ENCODE measurements at regions of chr16 and their contacts with region 1.

Region 1: DNA sequence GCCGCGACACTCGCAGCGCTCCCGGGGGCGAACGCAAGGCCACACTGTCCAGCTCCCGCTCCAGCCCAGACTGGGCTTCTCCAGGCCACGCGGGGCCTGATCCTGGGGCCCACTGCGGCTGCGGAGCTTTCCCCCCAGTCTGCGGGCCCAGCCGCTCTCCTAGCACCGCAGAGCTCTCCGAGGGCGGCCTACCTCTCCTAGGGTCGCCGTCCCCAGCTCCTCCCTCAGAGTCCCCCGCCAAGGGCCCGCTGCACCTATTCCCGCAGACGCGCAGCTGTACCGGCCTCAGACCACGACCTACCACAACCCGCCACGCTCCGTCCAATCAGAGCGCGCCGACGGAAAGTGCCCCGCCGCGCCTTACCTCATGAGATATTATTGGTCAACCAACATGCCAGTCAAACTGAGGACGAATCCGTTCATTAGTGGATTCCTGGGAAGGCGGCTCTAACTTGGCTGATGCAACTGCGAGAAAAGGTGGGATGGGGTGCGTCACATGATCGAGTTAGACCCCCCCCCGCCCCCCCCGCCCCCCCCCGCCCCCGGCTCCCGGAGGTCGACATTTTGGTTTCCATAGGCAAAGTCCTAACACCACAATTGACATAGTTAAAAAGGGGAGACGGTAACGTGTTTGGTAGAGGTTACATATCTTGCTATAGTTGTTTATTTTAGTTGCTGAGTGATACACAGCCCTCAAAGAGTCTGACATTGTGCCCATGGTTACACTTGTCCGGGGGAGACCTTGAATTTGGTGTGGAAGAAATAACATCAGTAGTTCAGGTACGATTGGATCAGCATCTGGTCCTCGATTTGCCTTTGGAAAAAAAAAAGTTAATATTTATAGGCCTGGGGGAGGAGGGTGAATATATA is at the start of gene AARS1:
- DNase-seq: peak; percentile 96
- ATAC-seq: peak; percentile 99
- H3K4me3 Mint-ChIP-seq: peak within 1 kb of the TSS; percentile 92
- H3K27ac Mint-ChIP-seq: peak within 1 kb of the TSS; percentile 96
- H3K4me1 Mint-ChIP-seq: peaks cover 37% of the 10 kb centered on the region
- H3K27me3 Mint-ChIP-seq: no peaks in the 10 kb centered on the region
- total RNA-seq, gene AARS1: 180 to 189 TPM

Region 2: GRCh38 chr16:70251629-70252354 is 37.7 kb before region 1 on chr16 and contains the start of gene EXOSC6:
- CTCF ChIA-PET with region 1: interaction called, 6 read pairs
- POLR2A ChIA-PET with region 1: interaction called, 6 read pairs
- intact Hi-C with region 1: loop called (anchors 1 kb)
- DNase-seq: peak; percentile 96
- ATAC-seq: peak; percentile 94
- H3K4me3 Mint-ChIP-seq: peak within 1 kb of the TSS; percentile 85
- H3K27ac Mint-ChIP-seq: peak within 1 kb of the TSS; percentile 84
- H3K4me1 Mint-ChIP-seq: peaks cover 16% of the 10 kb centered on the region
- H3K27me3 Mint-ChIP-seq: no peaks in the 10 kb centered on the region
- total RNA-seq, gene EXOSC6: 18.7 to 23.5 TPM

Region 3: DNA sequence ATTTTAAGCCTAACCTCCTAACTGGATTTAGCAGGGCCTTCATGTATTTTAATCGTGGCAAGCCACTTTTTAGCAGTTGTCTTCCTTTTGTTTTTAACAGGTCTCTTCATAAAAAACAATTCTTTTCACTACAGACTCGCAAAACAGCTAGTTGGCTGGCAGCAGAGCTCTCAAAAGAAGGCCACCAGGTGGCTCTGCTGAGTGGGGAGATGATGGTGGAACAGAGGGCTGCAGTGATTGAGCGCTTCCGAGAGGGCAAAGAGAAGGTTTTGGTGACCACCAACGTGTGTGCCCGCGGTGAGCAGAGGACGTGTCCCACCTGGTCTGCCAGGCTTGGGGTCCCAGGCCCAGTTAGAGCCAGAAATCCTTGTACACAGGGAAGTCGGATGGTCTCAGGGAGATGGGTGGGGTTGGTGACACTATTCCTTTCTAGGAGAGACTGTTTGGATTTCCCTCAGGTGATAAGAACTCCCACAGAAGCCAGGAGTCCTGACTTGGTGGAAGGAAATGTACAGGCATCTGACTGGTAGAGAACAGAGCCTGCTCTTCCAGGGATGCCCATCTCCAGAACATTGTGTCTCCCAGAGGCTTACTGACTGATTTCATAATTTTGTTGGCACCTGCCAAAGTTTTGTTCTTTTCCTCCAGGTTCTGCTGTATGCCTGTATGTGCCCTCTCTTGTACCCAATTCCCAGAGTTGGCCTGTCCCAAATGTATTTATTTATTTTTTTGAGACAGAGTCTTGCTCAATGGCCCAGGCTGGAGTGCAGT is 42.3 kb after region 1 on chr16:
- CTCF ChIA-PET with region 1: no interaction called
- POLR2A ChIA-PET with region 1: no interaction called
- intact Hi-C with region 1: no loop called
- DNase-seq: peak; percentile 34
- ATAC-seq: no peak
- H3K4me3 Mint-ChIP-seq: no peak overlapping the region
- H3K27ac Mint-ChIP-seq: no peak overlapping the region
- H3K4me1 Mint-ChIP-seq: no peaks in the 10 kb centered on the region
- H3K27me3 Mint-ChIP-seq: no peaks in the 10 kb centered on the region

Region 4: GRCh38 chr16:70438969-70439862 is 149.8 kb after region 1 on chr16 and contains the start of gene ST3GAL2:
- CTCF ChIA-PET with region 1: no interaction called
- POLR2A ChIA-PET with region 1: no interaction called
- intact Hi-C with region 1: loop called in 1 of 2 experiments (anchors 1 kb)
- DNase-seq: peak; percentile 97
- ATAC-seq: peak; percentile 97
- H3K4me3 Mint-ChIP-seq: peak within 1 kb of the TSS; percentile 96
- H3K27ac Mint-ChIP-seq: peak within 1 kb of the TSS; percentile 89
- H3K4me1 Mint-ChIP-seq: peaks cover 33% of the 10 kb centered on the region
- H3K27me3 Mint-ChIP-seq: no peaks in the 10 kb centered on the region
- total RNA-seq, gene ST3GAL2: 14.8 to 16.6 TPM

Region 5: DNA sequence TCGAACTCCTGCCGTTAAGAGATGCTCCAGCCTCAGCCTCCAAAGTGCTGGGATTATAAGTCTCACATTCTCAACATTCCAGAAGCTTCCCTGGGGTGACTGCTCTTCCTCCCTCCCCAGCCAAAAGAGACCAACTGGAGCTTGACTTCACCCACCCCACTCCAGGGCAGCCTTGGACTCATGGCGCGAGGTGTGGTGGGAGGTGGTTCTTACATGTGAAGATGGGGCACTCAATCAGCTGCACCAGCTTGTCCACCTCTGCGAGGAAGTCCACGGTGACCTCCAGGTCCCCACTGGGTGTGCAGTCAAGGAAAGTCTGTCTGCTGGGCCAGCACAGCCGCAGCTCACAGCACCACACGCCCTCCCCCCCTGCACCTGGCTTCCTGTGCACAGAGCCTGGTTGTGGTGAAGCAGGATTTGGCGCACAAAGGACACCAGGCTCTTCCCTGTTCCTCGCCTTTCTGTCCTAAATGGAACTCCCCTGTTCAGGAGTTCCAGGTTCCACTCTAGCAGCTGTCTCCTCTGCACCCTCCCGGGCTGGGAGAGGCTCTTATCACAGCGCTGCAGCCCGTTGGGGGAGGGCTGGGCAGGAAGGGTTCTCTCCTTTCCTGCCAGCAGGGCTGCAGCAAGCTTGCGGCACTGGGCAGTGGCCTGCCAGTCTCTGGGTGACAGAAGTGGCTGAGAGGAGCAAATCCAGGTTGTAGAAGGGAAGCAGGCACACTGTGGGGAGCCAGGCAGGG is 406.0 kb after region 1 on chr16:
- CTCF ChIA-PET with region 1: no interaction called
- POLR2A ChIA-PET with region 1: no interaction called
- intact Hi-C with region 1: no loop called
- DNase-seq: no peak
- ATAC-seq: peak; percentile 17
- H3K4me3 Mint-ChIP-seq: no peak overlapping the region
- H3K27ac Mint-ChIP-seq: peak overlapping the region; percentile 19
- H3K4me1 Mint-ChIP-seq: peaks cover 36% of the 10 kb centered on the region
- H3K27me3 Mint-ChIP-seq: no peaks in the 10 kb centered on the region

Region 6: DNA sequence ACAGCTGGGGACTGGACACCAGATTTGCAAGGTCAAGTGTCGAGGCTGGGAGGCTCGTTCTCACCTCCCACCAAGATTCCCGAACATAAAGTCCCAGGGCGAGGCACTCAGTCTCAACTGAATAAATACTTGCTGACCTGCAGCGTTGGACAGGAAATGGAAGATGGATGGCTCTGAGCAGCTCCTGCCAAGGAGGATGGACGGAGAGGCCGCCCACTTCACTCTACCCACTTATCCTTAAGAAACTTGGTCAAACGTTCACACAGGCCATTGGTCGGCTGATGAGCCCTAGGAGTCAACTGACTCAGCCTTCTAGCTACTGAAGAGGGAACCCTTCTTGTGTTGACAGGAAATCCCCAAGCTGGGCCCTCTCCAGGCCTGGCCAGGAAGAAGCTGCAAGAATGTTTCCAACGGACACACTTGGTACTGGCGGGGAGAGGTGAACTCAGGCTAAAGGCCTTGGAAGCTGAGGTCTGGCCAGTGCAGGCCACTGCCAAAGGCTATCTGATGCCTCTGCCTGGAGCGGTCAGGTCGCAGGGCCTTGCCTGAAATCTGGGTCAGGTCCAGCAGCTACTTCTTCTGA is 461.5 kb after region 1 on chr16:
- CTCF ChIA-PET with region 1: no interaction called
- POLR2A ChIA-PET with region 1: no interaction called
- intact Hi-C with region 1: no loop called
- DNase-seq: no peak
- ATAC-seq: no peak
- H3K4me3 Mint-ChIP-seq: no peak overlapping the region
- H3K27ac Mint-ChIP-seq: peak overlapping the region; percentile 31
- H3K4me1 Mint-ChIP-seq: peaks cover 43% of the 10 kb centered on the region
- H3K27me3 Mint-ChIP-seq: no peaks in the 10 kb centered on the region

Measured in activated CD4-positive, alpha-beta T cell treated with anti-CD3 and anti-CD28 coated beads for 36 hours (primary cell).